CD8-positive, alpha-beta T cell (primary cell): ENCODE measurements at regions of chr15 and their contacts with region 1.

Region 1: GRCh38 chr15:35751413-35752133 is 205.6 kb upstream of the DPH6 start:
- DNase-seq: peak in 7 of 9 experiments; percentile 13 to 51 (median 35)
- ATAC-seq: no peak
- H3K4me3 ChIP-seq: no peak overlapping the region
- H3K4me3 Mint-ChIP-seq: no peak overlapping the region
- H3K27ac ChIP-seq: no peak overlapping the region
- H3K27ac Mint-ChIP-seq: no peak overlapping the region
- H3K4me1 ChIP-seq: no peaks in the 10 kb centered on the region
- H3K4me1 Mint-ChIP-seq: no peaks in the 10 kb centered on the region
- H3K27me3 ChIP-seq: no peaks in the 10 kb centered on the region
- H3K27me3 Mint-ChIP-seq: peaks cover 2% of the 10 kb centered on the region
- CTCF ChIP-seq: peak; percentile 48

Region 2: GRCh38 chr15:35740761-35741160 is 10.8 kb before region 1 on chr15:
- CTCF ChIA-PET with region 1: interaction called, 20 read pairs
- POLR2A ChIA-PET with region 1: no interaction called
- intact Hi-C with region 1: no loop called
- DNase-seq: no peak
- ATAC-seq: no peak
- H3K4me3 ChIP-seq: no peak overlapping the region
- H3K4me3 Mint-ChIP-seq: no peak overlapping the region
- H3K27ac ChIP-seq: no peak overlapping the region
- H3K27ac Mint-ChIP-seq: no peak overlapping the region
- H3K4me1 ChIP-seq: no peaks in the 10 kb centered on the region
- H3K4me1 Mint-ChIP-seq: no peaks in the 10 kb centered on the region
- H3K27me3 ChIP-seq: no peaks in the 10 kb centered on the region
- H3K27me3 Mint-ChIP-seq: peaks cover 11% of the 10 kb centered on the region
- CTCF ChIP-seq: no peak

Region 3: GRCh38 chr15:35784745-35785144 is 33.2 kb after region 1 on chr15:
- CTCF ChIA-PET with region 1: no interaction called
- POLR2A ChIA-PET with region 1: no interaction called
- intact Hi-C with region 1: no loop called
- DNase-seq: no peak
- ATAC-seq: no peak
- H3K4me3 ChIP-seq: no peak overlapping the region
- H3K4me3 Mint-ChIP-seq: no peak overlapping the region
- H3K27ac ChIP-seq: no peak overlapping the region
- H3K27ac Mint-ChIP-seq: no peak overlapping the region
- H3K4me1 ChIP-seq: no peaks in the 10 kb centered on the region
- H3K4me1 Mint-ChIP-seq: no peaks in the 10 kb centered on the region
- H3K27me3 ChIP-seq: no peaks in the 10 kb centered on the region
- H3K27me3 Mint-ChIP-seq: no peaks in the 10 kb centered on the region
- CTCF ChIP-seq: no peak